ENCODE measurements at regions of chr9 and their contacts with region 1.

Region 1: GRCh38 chr9:68999393-69000105 is 14.4 kb downstream of the PRKACG start:
- DNase-seq: peak in 1 of 2 donors; percentile 67
- H3K4me3 ChIP-seq: no peak overlapping the region
- CTCF ChIP-seq: no peak
- POLR2A ChIP-seq: no peak

Region 2: GRCh38 chr9:68584189-68585033 is 415.1 kb before region 1 on chr9:
- intact Hi-C with region 1: loop called (anchors 10 kb)
- DNase-seq: peak; percentile 75 to 91
- H3K4me3 ChIP-seq: no peak overlapping the region
- CTCF ChIP-seq: peak in 1 of 3 donors; percentile 93
- POLR2A ChIP-seq: no peak

Region 3: GRCh38 chr9:68947842-68948569 is 51.5 kb before region 1 on chr9:
- intact Hi-C with region 1: no loop called
- DNase-seq: no peak
- H3K4me3 ChIP-seq: no peak overlapping the region
- CTCF ChIP-seq: no peak
- POLR2A ChIP-seq: no peak